Thyroid gland (tissue), 4 donors: ENCODE measurements at regions of chr7 and their contacts with region 1.

Region 1: DNA sequence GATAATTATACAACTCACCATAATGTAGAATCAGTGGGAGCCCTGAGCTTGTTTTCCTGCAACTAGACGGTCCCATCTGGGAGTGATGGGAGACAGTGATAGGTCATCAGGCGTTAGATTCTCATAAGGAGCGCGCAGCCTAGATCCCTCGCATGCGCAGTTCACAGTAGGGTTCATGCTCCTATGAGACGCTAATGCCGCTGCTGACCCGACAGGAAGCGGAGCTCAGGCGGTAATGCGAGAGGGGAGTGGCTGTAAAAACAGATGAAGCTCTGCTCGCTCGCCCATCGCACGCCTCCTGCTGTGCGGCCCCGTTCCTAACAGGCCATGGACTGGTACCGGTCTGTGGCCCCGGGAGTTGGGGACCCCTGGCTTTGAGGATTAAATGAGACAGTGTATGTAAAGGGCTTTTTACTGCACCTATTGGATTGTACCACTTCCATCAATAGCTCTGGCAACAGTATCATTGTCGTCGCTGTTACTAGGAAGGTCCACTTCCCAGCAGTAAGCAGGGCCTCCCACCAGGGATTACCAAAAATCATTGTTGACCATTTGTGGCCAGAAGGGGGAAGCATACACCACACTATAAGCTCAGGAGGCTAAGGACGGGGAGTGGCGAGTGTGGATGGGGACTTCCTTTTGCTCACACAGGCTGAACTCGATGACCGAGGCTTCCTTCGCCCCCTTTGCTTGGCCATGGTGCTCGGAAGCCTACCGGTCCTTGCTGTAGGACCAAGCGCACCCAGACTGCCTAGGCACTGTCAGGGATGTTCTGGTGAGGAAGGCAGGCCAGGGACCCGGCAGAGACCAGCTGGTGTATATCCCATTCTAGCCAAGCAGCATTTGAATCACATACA is 26.4 kb downstream of the AKR1B1 start:
- DNase-seq: peak; percentile 72 to 74
- H3K4me3 ChIP-seq: peak overlapping the region in 1 of 3 donors; percentile 15
- H3K27ac ChIP-seq: peak overlapping the region in 2 of 3 donors; percentile 44 to 63
- H3K4me1 ChIP-seq: peaks cover 0 to 5% of the 10 kb centered on the region in 2 donors
- H3K27me3 ChIP-seq: no peaks in the 10 kb centered on the region
- CTCF ChIP-seq: peak; percentile 38 to 98 (median 74)
- POLR2A ChIP-seq: peak in 1 of 2 donors; percentile 22

Region 2: GRCh38 chr7:134514663-134515062 is 82.1 kb after region 1 on chr7:
- intact Hi-C with region 1: loop called (anchors 2 kb)
- DNase-seq: no peak
- H3K4me3 ChIP-seq: no peak overlapping the region
- H3K27ac ChIP-seq: no peak overlapping the region
- H3K4me1 ChIP-seq: peaks cover 0 to 3% of the 10 kb centered on the region in 2 donors
- H3K27me3 ChIP-seq: no peaks in the 10 kb centered on the region
- CTCF ChIP-seq: peak; percentile 57 to 92 (median 74)
- POLR2A ChIP-seq: no peak

Region 3: DNA sequence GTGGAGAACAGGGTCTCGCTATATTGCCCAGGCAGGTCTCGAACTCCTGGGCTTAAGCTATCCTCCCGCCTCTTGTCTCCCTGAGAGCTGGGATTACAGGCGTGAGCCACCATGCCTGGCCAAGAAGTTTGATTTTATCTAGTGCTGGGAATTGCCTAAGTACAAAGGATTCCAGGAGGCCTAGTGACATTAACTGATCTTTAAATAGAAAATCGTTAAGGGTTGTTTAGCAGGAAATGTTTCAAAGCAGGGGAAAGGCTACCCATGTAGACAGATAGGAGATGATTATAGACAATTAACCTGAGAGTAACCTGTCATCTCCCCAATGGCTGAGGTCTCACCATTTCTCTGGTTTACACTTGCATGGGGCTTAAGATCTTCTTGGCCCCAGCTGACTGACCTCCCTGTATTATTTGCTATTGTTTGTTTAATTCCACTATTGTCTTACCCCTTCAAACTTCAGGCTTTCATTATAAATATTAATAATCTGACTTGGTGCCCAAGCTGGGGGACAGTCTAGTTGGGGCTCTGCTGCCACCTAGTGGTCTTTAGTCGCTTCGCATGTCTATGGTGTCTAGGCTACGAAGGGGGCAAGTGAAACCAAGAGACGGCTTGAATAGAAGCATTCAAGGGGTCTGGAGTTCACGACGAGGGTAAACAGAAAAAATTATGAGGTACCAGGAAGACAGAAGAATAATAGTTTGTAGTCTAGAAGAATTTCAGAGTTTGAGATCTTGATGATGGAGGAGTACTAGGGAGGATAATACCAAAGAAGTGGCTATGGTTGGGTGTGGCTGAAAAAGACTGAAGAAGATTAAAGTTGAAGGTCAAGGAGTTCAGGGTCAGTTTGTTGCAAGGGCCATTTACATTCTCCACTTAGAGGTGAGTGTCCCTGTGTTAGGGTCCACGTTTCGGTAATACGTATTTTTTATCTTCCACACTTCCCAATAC is 173.7 kb after region 1 on chr7:
- intact Hi-C with region 1: loop called (anchors 5 kb)
- DNase-seq: peak; percentile 60 to 64
- H3K4me3 ChIP-seq: no peak overlapping the region
- H3K27ac ChIP-seq: peak overlapping the region in 1 of 3 donors; percentile 6
- H3K4me1 ChIP-seq: peaks cover 3 to 14% of the 10 kb centered on the region in 2 donors
- H3K27me3 ChIP-seq: no peaks in the 10 kb centered on the region
- CTCF ChIP-seq: peak; percentile 80 to 94 (median 85)
- POLR2A ChIP-seq: no peak